Left colon (tissue), 2 donors: ENCODE measurements at regions of chr22 and their contacts with region 1.

Region 1: GRCh38 chr22:28594797-28595462 is 84.7 kb downstream of the TTC28 start:
- DNase-seq: no peak
- ATAC-seq: peak; percentile 94

Region 2: GRCh38 chr22:28019881-28020871 is 574.8 kb before region 1 on chr22:
- intact Hi-C with region 1: loop called in 1 of 2 experiments (anchors 10 kb)
- DNase-seq: peak; percentile 50 to 77
- ATAC-seq: peak; percentile 88

Region 3: GRCh38 chr22:28051787-28052356 is 543.1 kb before region 1 on chr22:
- intact Hi-C with region 1: loop called (anchors 2 to 10 kb)
- DNase-seq: peak in 1 of 2 donors; percentile 69
- ATAC-seq: peak; percentile 61

Region 4: DNA sequence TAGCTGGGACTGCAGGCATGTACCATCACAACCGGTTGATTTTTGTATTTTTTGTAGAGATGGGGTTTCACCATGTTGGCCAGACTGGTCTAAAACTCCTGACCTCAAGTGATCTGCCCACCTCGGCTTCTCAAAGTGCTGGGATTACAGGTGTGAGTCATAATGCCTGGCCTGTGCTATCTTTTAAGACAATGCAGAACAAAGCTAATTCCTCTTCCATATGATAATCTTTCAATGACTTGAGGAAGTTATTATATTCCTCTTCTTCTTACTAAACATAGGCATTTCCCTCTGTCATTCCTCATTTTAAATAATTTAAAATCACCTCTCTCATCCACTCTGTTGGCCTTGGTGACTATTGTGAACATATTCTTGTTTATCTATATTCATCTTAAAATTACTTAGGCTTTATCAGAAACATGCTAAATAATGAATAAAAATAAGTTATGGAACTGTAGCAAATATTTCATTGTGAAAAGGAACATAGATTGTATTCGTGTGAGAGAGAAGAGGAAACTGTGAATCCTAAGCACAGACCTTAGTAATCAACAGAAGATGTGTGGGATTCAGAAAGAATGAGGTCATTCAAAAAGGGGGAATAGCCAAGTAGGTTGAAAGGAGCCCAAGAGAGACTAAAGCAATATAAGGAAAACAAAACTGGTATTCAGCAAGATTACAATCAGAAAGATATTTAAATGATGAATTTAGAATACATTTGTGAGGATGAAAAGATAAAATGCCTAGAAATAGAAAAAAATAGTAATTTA is 184.7 kb before region 1 on chr22:
- intact Hi-C with region 1: no loop called
- DNase-seq: no peak
- ATAC-seq: no peak

Region 5: GRCh38 chr22:28521451-28521850 is 73.5 kb before region 1 on chr22:
- intact Hi-C with region 1: no loop called
- DNase-seq: no peak
- ATAC-seq: no peak

Region 6: GRCh38 chr22:28547132-28547842 is 47.6 kb before region 1 on chr22:
- intact Hi-C with region 1: no loop called
- DNase-seq: no peak
- ATAC-seq: no peak

Region 7: DNA sequence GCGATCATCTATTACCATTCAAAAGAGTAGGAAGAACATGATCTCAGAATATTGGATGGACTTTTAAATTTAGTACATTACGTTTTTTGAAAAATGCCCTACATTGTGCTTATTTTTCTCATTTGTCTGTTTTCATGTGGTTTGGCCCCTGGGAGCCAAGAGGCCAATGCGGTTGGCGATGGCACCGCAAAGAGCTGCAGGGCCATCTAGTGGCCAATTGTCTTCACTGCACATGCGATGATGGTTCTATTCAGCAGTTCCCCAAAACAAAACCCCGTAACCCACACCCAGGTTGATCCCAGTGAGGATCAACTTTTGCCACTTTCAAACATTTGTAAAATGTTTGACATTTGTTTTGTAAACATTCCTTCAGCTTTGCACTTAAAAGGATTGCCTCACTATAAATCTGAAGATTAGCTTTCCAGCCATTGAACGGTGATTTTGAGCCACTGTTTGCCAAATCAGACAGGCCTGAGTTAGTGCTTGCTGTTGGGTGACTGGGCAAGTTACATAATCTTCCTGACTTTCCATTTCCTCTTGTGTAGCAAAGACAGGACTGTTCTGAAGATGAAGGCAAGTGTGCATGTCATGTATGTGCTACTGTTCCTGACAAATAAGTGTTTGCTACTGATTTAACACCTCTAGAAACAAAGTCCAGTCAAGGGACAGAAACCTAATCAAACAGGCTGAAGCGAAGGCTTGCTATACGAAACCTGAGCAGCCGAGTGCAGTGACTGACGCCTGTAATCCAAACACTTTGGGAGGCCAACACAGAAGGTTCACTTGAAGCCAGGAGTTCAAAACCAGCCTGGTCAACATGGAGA is 234.6 kb after region 1 on chr22:
- intact Hi-C with region 1: loop called in 1 of 2 experiments (anchors 5 kb)
- DNase-seq: peak; percentile 68 to 84
- ATAC-seq: peak; percentile 86